ENCODE measurements at regions of chr10 and their contacts with region 1.

Region 1: GRCh38 chr10:43292755-43293676 is 26.2 kb upstream of the RASGEF1A start:
- DNase-seq: peak in 7 of 10 donors; percentile 11 to 70 (median 46)
- ATAC-seq: peak; percentile 41 to 77
- H3K4me3 Mint-ChIP-seq: peak overlapping the region in 9 of 10 donors; percentile 11 to 84 (median 61)
- H3K27ac Mint-ChIP-seq: peak overlapping the region in 9 of 10 donors; percentile 37 to 81 (median 66)
- H3K4me1 Mint-ChIP-seq: peaks cover 23 to 45% (median 40%) of the 10 kb centered on the region in 4 donors
- H3K27me3 Mint-ChIP-seq: peaks cover 0 to 7% (median 4%) of the 10 kb centered on the region in 5 donors

Region 2: DNA sequence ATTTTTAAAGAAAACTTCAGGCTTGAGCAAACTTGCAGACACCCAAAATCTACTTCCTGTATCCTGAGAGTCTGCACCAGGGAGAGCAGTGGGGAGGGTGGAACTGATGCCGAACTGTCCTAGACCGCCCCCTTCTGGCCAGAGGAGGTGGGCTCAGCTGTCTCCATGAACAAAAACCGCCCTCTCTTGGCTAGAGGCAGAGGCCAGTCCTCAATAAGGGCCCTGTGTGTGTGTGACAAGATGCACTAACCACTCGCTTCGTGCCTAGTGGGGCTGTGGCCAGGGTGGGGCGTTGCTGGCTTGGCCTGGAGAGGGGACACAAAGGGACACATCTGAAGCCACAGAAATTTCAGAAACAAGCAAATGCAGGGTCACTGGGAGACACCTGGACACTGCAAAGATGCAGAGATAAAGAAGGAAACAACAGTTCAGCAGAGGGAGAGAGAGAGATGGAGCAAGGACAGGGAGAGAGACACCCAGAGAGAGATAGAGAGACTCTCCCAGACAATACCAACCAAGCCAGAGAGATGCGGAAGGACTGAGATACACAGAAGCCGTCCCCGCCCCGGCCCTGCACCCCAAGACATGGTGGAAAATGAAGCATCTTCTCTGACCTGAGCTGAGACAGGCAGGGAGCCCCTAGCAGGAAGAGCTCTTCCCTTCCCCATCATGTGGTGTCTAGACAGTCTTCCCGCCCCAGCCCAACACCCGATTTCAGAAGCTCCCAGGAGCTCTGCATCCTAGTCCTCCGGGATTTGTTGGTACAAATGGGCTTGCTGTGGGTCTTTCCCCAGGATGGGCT is 55.7 kb after region 1 on chr10:
- POLR2A ChIA-PET with region 1: interaction called, 18 read pairs
- DNase-seq: peak; percentile 70 to 92 (median 82)
- ATAC-seq: peak; percentile 100
- H3K4me3 Mint-ChIP-seq: peak overlapping the region in 4 of 10 donors; percentile 4 to 34 (median 20)
- H3K27ac Mint-ChIP-seq: peak overlapping the region in 7 of 10 donors; percentile 33 to 84 (median 58)
- H3K4me1 Mint-ChIP-seq: peaks cover 12 to 19% (median 16%) of the 10 kb centered on the region in 4 donors
- H3K27me3 Mint-ChIP-seq: peaks cover 0 to 26% (median 14%) of the 10 kb centered on the region in 5 donors